Gastrocnemius medialis (tissue), 4 donors: ENCODE measurements at regions of chr3 and their contacts with region 1.

Region 1: GRCh38 chr3:17140670-17141505 is 256.1 kb downstream of the PLCL2 start:
- DNase-seq: peak; percentile 73 to 90
- ATAC-seq: peak; percentile 86 to 87
- H3K4me3 ChIP-seq: peak overlapping the region; percentile 27 to 54 (median 38)
- H3K27ac ChIP-seq: peak overlapping the region; percentile 82 to 87 (median 85)
- H3K4me1 ChIP-seq: peaks cover 11 to 25% of the 10 kb centered on the region in 2 donors
- H3K27me3 ChIP-seq: no peaks in the 10 kb centered on the region
- CTCF ChIP-seq: peak in 4 of 5 experiments; percentile 37 to 62 (median 41)
- POLR2A ChIP-seq: no peak

Region 2: GRCh38 chr3:16600780-16601539 is 539.9 kb before region 1 on chr3:
- in situ Hi-C with region 1: no loop called
- intact Hi-C with region 1: loop called (anchors 5 kb)
- DNase-seq: peak; percentile 50 to 66
- ATAC-seq: peak; percentile 72 to 87
- H3K4me3 ChIP-seq: no peak overlapping the region
- H3K27ac ChIP-seq: no peak overlapping the region
- H3K4me1 ChIP-seq: peaks cover 0 to 5% of the 10 kb centered on the region in 2 donors
- H3K27me3 ChIP-seq: no peaks in the 10 kb centered on the region
- CTCF ChIP-seq: peak; percentile 79 to 92 (median 88)
- POLR2A ChIP-seq: no peak

Region 3: GRCh38 chr3:16884084-16884747 is 256.7 kb before region 1 on chr3:
- in situ Hi-C with region 1: no loop called
- intact Hi-C with region 1: loop called (anchors 2 kb)
- DNase-seq: peak; percentile 66 to 78
- ATAC-seq: peak; percentile 47 to 63
- H3K4me3 ChIP-seq: peak overlapping the region; percentile 87 to 93 (median 90)
- H3K27ac ChIP-seq: peak overlapping the region; percentile 93 to 98 (median 96)
- H3K4me1 ChIP-seq: peaks cover 55 to 59% of the 10 kb centered on the region in 2 donors
- H3K27me3 ChIP-seq: no peaks in the 10 kb centered on the region
- CTCF ChIP-seq: peak; percentile 64 to 82 (median 76)
- POLR2A ChIP-seq: peak in 1 of 2 donors; percentile 36

Region 4: GRCh38 chr3:17023006-17023664 is 117.8 kb before region 1 on chr3:
- in situ Hi-C with region 1: no loop called
- intact Hi-C with region 1: loop called (anchors 5 kb)
- DNase-seq: no peak
- ATAC-seq: no peak
- H3K4me3 ChIP-seq: no peak overlapping the region
- H3K27ac ChIP-seq: peak overlapping the region in 1 of 4 donors; percentile 48
- H3K4me1 ChIP-seq: peaks cover 37% of the 10 kb centered on the region in 2 donors
- H3K27me3 ChIP-seq: no peaks in the 10 kb centered on the region
- CTCF ChIP-seq: no peak
- POLR2A ChIP-seq: no peak

Region 5: DNA sequence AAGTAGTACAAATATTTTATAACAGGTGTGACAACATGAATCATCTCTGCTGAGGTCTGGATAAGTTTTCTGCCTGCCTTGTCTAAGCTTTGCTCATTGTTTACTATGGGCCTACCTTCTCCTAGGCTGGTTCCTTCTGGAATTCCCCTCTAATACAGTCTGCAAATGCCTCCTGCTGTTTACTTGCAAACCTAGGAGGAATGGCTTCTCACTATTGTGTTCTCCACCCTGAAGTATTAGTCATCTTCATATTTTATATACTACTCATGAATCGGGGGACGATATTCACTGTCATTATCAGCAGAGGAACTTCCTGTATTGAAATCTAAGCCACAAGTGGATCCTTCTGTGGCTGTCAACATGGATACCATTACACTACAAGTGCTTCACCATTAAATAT is 101.3 kb before region 1 on chr3:
- in situ Hi-C with region 1: no loop called
- intact Hi-C with region 1: no loop called
- DNase-seq: no peak
- ATAC-seq: peak; percentile 64 to 89
- H3K4me3 ChIP-seq: no peak overlapping the region
- H3K27ac ChIP-seq: peak overlapping the region; percentile 59 to 82 (median 70)
- H3K4me1 ChIP-seq: peaks cover 22 to 34% of the 10 kb centered on the region in 2 donors
- H3K27me3 ChIP-seq: no peaks in the 10 kb centered on the region
- CTCF ChIP-seq: no peak
- POLR2A ChIP-seq: no peak

Region 6: DNA sequence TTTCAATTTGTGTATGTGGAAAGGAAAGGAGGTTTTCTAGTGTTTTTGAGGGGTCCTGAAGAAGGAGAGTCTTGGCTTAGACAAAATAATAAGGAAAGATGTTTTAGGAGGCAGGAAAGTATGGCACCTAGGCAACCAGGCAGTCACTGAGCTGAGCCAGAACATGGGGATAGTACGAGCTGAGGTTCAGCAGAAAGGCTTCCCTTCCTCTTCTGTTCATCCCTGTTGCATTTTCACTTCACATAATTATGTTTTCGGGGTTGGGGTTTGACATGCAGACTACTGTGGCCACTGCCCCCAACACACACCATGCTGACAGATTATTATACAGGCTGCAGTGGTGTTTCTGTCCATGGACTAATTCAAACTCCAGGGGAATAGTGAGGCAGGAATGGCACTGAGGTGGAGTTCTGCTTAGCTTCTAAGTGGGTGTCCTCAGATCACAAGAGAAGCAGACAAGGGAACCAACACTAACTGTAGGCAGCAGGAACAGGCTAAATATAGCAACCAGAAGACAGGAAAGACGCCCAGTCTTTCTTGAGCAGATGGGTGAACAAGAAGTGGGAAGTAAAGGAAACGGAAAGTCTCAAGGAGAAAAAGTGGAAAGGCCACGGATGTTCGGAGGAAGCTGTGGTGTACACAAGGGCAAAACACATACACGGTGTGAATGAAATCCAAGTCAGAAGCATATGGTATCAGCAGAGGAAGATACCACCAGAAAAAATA is 49.6 kb after region 1 on chr3:
- in situ Hi-C with region 1: no loop called
- intact Hi-C with region 1: loop called (anchors 2 kb)
- DNase-seq: peak; percentile 23 to 55
- ATAC-seq: peak; percentile 83 to 84
- H3K4me3 ChIP-seq: peak overlapping the region in 1 of 4 donors; percentile 11
- H3K27ac ChIP-seq: peak overlapping the region; percentile 76 to 86 (median 85)
- H3K4me1 ChIP-seq: peaks cover 45 to 55% of the 10 kb centered on the region in 2 donors
- H3K27me3 ChIP-seq: no peaks in the 10 kb centered on the region
- CTCF ChIP-seq: no peak
- POLR2A ChIP-seq: no peak